Dendritic cell treated with granulocyte-macrophage colony-stimulating factor and Interleukin-4, amounts not matched to agents 40 ng/mL and 50 ng/mL, for 4 days (primary cell): ENCODE measurements at regions of chr15 and their contacts with region 1.

Region 1: DNA sequence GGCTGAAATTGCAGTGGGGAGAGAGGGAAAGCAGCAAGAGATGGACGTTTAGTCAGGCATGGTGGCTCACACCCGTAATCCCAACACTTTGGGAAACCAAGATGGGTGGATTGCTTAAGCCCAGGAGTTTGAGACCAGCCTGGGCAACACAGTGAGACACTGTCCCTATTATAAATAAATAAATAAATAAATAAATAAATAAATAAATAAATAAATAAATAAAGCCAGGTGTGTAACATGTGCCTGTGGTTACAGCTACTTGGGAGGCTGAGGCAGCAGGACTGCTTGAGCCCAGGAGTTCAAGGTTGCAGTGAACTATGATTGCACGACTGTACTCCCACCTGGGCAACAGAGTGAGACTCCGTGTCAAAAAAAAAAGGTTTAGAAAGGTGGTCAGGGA is 54.0 kb upstream of the ARPP19 start:
- H3K4me3 Mint-ChIP-seq: no peak overlapping the region
- H3K27ac Mint-ChIP-seq: no peak overlapping the region
- H3K4me1 Mint-ChIP-seq: no peaks in the 10 kb centered on the region
- H3K27me3 Mint-ChIP-seq: no peaks in the 10 kb centered on the region

Region 2: GRCh38 chr15:52558196-52558595 is 64.6 kb before region 1 on chr15:
- intact Hi-C with region 1: no loop called
- H3K4me3 Mint-ChIP-seq: no peak overlapping the region
- H3K27ac Mint-ChIP-seq: peak overlapping the region; percentile 45
- H3K4me1 Mint-ChIP-seq: peaks cover 45% of the 10 kb centered on the region
- H3K27me3 Mint-ChIP-seq: no peaks in the 10 kb centered on the region

Region 3: GRCh38 chr15:52645916-52646315 is 23.1 kb after region 1 on chr15:
- intact Hi-C with region 1: loop called (anchors 1 kb)
- H3K4me3 Mint-ChIP-seq: no peak overlapping the region
- H3K27ac Mint-ChIP-seq: no peak overlapping the region
- H3K4me1 Mint-ChIP-seq: no peaks in the 10 kb centered on the region
- H3K27me3 Mint-ChIP-seq: no peaks in the 10 kb centered on the region

Region 4: DNA sequence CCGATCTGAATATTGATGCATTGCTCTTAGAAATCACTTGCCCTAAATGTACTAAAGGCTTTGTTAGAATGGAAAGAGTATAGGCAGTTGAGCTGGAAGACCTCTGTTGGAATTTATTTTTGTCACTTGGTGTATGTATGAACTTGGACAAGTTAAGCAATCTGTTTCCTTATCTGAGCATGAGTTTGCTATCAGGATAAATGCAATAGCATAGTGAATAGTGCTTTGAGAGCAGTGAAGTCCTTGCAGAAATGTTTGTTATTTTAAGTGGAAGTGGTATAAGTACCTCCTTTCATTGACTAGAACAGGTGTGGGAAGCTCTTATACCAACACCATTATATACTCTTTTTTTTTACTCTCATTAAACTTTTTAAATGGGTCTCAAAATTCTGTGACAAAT is 313.7 kb after region 1 on chr15:
- intact Hi-C with region 1: no loop called
- H3K4me3 Mint-ChIP-seq: no peak overlapping the region
- H3K27ac Mint-ChIP-seq: no peak overlapping the region
- H3K4me1 Mint-ChIP-seq: no peaks in the 10 kb centered on the region
- H3K27me3 Mint-ChIP-seq: no peaks in the 10 kb centered on the region